PC-3 (cell line): ENCODE measurements at regions of chr17 and their contacts with region 1.

Region 1: GRCh38 chr17:81484195-81484979 is 28.2 kb downstream of the ACTG1 start:
- DNase-seq: peak; percentile 89
- ATAC-seq: peak; percentile 75
- H3K4me3 ChIP-seq: peak overlapping the region; percentile 62
- H3K27ac ChIP-seq: no peak overlapping the region
- H3K4me1 ChIP-seq: peaks cover 15% of the 10 kb centered on the region
- H3K27me3 ChIP-seq: no peaks in the 10 kb centered on the region
- CTCF ChIP-seq: peak; percentile 92

Region 2: DNA sequence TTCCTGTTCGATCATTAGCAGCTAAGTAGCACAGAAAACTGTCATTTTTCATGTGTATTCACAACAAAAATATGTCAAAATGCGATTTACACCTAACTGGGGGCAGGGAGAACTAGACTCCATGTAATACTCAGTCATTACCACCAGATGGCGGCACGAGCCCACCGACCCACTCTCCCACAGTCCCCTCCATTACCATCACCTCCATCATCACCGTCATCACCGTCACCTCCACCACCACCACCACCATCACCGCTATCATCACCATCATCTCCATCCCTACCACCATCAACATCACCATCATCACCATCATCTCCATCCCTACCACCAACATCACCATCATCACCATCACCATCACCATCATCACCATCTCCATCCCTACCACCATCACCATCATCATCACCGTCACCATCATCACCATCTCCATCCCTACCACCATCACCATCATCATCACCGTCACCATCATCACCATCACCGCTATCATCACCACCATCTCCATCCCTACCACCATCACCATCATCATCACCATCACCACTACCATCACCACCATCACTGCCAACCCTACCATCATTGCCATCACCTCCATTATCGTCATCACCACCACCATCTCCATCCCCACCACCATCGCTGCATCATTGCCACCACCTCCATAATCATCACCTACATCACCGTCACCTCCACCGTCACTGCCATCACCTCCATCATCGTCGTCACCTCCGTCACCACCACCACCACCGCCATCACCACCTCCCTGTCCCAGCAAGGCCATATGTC is 230.8 kb before region 1 on chr17:
- CTCF ChIA-PET with region 1: interaction called, 6 read pairs
- POLR2A ChIA-PET with region 1: no interaction called
- intact Hi-C with region 1: loop called (anchors 2 kb)
- DNase-seq: peak; percentile 44
- ATAC-seq: no peak
- H3K4me3 ChIP-seq: no peak overlapping the region
- H3K27ac ChIP-seq: no peak overlapping the region
- H3K4me1 ChIP-seq: 0 out of 2 replicates have a peak, but pooled peaks cover 3% of the 10 kb centered on the region
- H3K27me3 ChIP-seq: no peaks in the 10 kb centered on the region
- CTCF ChIP-seq: peak; percentile 85

Region 3: DNA sequence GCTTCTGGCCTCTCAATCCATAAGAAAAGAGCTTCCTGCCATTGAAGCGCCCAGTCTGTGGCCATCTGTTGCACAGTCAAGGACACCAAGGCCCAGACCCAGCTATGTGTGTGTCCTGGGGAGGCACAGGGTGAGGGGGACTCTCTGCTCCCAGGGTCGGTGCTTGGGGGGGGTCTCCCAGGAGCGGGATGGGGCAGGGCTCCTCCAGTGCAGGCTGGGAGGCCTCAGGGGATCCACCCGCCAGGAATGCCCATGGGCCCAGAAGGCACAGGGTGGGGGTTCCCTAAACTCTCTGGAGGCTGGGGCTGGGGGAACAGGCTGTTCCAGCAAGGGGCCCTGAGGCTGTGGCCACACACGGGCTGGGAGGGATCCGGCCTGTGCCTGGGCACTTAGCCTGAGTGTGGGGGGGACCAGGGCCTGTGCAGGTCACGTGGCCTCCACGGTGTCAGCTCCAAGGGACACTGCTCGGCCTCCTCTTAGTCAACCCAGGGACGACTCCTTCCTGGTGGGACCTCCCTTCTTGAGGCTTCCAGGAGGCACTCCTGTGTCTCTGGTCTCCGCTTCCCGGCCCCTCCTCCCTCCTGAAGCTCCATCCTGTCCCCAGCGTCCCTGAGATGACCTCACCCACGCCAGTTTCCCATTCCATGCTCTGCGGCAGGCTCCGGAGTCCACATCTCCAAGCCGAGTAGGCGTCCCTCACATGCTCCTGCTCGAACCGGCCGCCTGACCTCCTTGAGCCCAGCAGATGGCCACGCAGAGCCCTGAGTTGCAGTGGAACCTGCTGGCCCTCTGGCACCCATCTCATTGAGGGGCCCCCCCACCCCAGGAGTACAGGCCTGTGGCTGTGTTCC is 112.3 kb before region 1 on chr17:
- CTCF ChIA-PET with region 1: no interaction called
- POLR2A ChIA-PET with region 1: no interaction called
- intact Hi-C with region 1: no loop called
- DNase-seq: peak; percentile 39
- ATAC-seq: peak; percentile 92
- H3K4me3 ChIP-seq: no peak overlapping the region
- H3K27ac ChIP-seq: no peak overlapping the region
- H3K4me1 ChIP-seq: no peaks in the 10 kb centered on the region
- H3K27me3 ChIP-seq: no peaks in the 10 kb centered on the region
- CTCF ChIP-seq: peak; percentile 63

Region 4: GRCh38 chr17:81401723-81402529 is 82.5 kb before region 1 on chr17:
- CTCF ChIA-PET with region 1: interaction called, 4 read pairs
- POLR2A ChIA-PET with region 1: no interaction called
- intact Hi-C with region 1: loop called (anchors 2 kb)
- DNase-seq: peak; percentile 39
- ATAC-seq: no peak
- H3K4me3 ChIP-seq: no peak overlapping the region
- H3K27ac ChIP-seq: no peak overlapping the region
- H3K4me1 ChIP-seq: peaks cover 12% of the 10 kb centered on the region; the same call in 1 of the 2 replicates
- H3K27me3 ChIP-seq: no peaks in the 10 kb centered on the region
- CTCF ChIP-seq: peak; percentile 60

Region 5: GRCh38 chr17:81440876-81441244 is 43.5 kb before region 1 on chr17:
- CTCF ChIA-PET with region 1: no interaction called
- POLR2A ChIA-PET with region 1: no interaction called
- intact Hi-C with region 1: no loop called
- DNase-seq: peak; percentile 25
- ATAC-seq: 0 out of 2 replicates have a peak, but pooled peaks have one; percentile 25
- H3K4me3 ChIP-seq: no peak overlapping the region
- H3K27ac ChIP-seq: no peak overlapping the region
- H3K4me1 ChIP-seq: no peaks in the 10 kb centered on the region
- H3K27me3 ChIP-seq: no peaks in the 10 kb centered on the region
- CTCF ChIP-seq: peak; percentile 71

Region 6: DNA sequence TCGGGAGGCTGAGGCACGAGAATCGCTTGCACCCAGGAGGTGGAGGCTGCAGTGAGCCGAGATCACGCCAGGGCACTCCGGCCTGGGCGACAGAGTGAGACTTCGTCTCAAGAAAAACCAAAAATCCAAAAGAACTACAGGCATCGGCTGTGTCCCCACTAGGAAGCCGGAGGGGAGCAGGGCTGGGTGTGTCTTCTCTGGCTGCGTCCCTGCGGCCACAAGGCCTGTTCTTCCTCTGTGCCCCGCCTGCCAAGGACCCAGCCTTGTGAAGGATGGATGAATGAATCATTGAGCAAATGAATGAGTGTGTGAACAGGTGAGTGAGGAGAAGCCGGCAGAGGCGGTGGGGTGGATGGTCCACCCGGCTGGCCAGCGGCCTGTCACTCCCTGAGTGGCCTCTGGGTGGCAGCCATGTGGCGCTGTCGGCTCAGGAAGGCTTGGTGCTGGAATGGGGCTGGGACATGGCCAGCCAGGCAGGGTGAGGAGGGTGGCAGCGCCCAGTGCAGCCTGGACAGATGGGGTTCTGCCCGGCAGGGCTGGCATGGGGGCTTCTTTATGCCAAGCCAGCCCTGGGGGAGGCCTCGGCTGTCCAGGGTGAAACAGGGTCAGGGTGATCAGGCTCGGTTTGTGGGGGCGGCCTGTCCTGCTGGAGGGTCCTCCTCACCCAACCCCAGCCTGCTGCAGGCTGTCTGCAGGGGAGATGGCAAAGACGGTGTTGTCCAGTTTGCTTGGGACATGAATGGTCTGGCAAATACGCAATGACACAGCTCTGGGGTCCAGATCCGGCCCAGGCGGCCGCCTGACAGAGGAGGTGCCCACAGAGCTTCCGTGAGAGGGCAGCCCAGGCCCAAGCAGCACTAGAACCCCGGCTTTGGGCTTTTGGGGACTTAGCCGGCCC is 249.4 kb after region 1 on chr17:
- CTCF ChIA-PET with region 1: no interaction called
- POLR2A ChIA-PET with region 1: no interaction called
- intact Hi-C with region 1: no loop called
- DNase-seq: peak; percentile 96
- ATAC-seq: peak; percentile 73
- H3K4me3 ChIP-seq: peak overlapping the region; percentile 14; the same call in 1 of the 2 replicates
- H3K27ac ChIP-seq: peak overlapping the region; percentile 47
- H3K4me1 ChIP-seq: peaks cover 32% of the 10 kb centered on the region
- H3K27me3 ChIP-seq: no peaks in the 10 kb centered on the region
- CTCF ChIP-seq: peak; percentile 93

Region 7: GRCh38 chr17:82816358-82817149 is 1332.2 kb after region 1 on chr17:
- CTCF ChIA-PET with region 1: no interaction called
- POLR2A ChIA-PET with region 1: no interaction called
- intact Hi-C with region 1: no loop called
- DNase-seq: no peak
- ATAC-seq: no peak
- H3K4me3 ChIP-seq: no peak overlapping the region
- H3K27ac ChIP-seq: no peak overlapping the region
- H3K4me1 ChIP-seq: no peaks in the 10 kb centered on the region
- H3K27me3 ChIP-seq: no peaks in the 10 kb centered on the region
- CTCF ChIP-seq: no peak